Posterior vena cava (tissue), 2 donors: ENCODE measurements at regions of chr16 and their contacts with region 1.

Region 1: GRCh38 chr16:78443542-78444364 is 344.3 kb downstream of the WWOX start:
- DNase-seq: no peak

Region 2: DNA sequence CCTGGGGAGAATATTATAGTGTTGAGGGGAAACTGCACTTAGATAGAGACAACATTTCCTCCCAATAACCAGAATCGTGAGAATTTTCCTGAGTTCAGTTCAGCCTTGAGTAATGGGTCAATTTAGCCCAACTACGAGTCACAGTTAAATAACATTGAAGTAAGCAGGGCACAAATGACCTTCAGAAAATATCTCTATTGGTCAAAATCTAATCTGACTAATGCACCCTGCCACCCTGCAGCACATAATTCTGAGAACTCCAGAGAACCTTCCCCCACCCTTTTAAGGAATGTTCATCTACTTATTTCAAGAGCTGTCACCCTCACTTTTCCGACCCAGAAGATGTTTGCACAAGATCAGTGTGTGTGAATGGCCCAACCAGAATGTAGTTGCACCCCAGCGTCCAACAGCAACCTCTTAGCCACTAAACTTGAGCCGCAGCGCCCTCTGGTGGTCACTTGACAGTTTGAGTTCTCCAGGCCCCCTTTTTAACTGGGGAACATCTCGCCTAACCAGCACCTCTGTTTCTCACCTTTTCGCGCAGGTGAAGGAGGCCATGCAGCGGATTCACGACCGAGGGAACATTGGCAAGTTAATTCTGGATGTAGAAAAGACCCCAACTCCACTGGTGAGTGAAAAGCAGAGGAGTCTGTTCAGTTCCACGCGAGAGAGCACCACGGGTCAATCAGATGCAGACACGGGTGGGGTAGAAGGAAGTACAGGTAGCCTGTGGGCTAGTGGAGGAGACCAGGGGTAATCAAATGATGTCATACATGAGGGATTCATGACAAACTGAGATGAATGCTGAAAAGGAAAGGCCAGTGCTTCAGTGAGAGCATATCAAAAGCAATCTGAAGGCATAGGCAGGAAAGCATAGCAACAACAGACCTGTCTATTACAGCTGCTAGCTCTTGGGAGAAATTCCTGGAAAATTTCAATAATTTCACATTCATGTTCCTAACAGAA is 472.2 kb before region 1 on chr16:
- intact Hi-C with region 1: no loop called
- DNase-seq: peak; percentile 93

Region 3: DNA sequence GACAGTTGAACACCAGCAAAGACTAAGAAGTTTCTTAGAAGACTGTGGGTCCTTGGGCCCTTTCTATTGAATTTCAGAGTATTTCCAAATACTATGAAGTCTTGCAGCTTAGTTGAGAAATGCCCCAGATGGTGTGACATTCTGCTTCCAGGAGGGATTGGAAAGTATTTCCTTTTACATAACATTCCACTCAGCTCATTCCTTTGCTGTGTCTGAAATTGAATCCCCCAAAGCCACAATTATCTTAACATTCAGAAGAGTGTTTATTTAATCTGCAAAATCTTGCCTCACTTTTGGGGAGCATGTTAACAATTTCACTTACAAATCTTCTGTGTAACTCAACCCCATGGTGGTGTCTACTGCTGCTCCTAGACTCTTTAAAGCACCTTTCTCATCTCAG is 36.6 kb before region 1 on chr16:
- intact Hi-C with region 1: no loop called
- DNase-seq: no peak

Region 4: GRCh38 chr16:79698341-79698753 is 1254.6 kb after region 1 on chr16:
- intact Hi-C with region 1: no loop called
- DNase-seq: no peak

Region 5: DNA sequence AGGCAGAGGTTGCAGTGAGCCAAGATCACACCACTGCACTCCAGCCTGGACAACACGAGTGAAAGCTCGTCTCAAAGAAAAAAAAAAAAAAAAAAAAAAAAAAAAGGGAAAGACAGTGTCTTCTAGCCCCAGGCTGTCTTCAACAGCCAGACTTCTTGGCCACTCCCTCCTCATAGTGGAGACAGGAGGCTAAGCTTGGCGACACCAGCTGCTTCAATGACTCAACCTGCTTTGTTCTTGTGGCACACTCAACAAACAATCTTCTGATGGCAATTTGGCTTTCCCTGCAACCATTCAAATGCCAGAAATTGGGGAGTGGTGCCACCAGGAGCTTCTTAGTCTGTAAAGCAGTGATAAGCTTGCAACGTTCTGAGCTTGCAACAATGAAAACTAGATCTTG is 1806.6 kb after region 1 on chr16:
- intact Hi-C with region 1: loop called in 1 of 2 experiments (anchors 5 kb)
- DNase-seq: no peak